ENCODE measurements at regions of chr2 and their contacts with region 1.

Region 1: GRCh38 chr2:69858261-69858660 is 28.8 kb downstream of the GMCL1 start:
- DNase-seq: no peak
- ATAC-seq: no peak
- H3K4me3 ChIP-seq: no peak overlapping the region
- H3K27ac ChIP-seq: no peak overlapping the region
- H3K4me1 ChIP-seq: no peaks in the 10 kb centered on the region
- H3K27me3 ChIP-seq: no peaks in the 10 kb centered on the region
- CTCF ChIP-seq: no peak

Region 2: DNA sequence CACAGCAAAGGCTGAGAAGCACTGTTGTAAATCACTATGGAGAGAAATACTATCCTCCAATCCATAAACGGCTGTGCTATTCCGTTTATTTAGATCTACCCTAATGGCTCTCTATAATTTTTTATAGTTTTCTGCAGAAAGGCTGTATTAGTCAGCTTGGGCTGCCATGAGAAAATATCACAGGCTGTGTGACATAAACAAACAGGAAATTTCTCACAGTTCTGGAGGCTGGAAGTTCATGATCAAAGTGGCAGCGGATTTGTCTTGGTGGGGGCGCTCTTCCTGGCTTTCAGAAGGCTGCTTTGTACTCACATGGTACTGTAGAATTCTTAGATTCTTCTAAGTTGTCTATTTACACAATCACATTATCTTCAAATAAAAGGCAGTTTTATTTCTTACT is 1839.5 kb before region 1 on chr2:
- intact Hi-C with region 1: no loop called
- DNase-seq: no peak
- ATAC-seq: no peak
- H3K4me3 ChIP-seq: no peak overlapping the region
- H3K27ac ChIP-seq: no peak overlapping the region
- H3K4me1 ChIP-seq: no peaks in the 10 kb centered on the region
- H3K27me3 ChIP-seq: peaks cover 0 to 5% (median 0%) of the 10 kb centered on the region in 7 donors
- CTCF ChIP-seq: no peak

Region 3: GRCh38 chr2:69615078-69615650 is 243.1 kb before region 1 on chr2:
- intact Hi-C with region 1: no loop called
- DNase-seq: no peak
- ATAC-seq: no peak
- H3K4me3 ChIP-seq: no peak overlapping the region
- H3K27ac ChIP-seq: no peak overlapping the region
- H3K4me1 ChIP-seq: peaks cover 4 to 56% (median 39%) of the 10 kb centered on the region in 9 donors
- H3K27me3 ChIP-seq: no peaks in the 10 kb centered on the region
- CTCF ChIP-seq: no peak

Region 4: DNA sequence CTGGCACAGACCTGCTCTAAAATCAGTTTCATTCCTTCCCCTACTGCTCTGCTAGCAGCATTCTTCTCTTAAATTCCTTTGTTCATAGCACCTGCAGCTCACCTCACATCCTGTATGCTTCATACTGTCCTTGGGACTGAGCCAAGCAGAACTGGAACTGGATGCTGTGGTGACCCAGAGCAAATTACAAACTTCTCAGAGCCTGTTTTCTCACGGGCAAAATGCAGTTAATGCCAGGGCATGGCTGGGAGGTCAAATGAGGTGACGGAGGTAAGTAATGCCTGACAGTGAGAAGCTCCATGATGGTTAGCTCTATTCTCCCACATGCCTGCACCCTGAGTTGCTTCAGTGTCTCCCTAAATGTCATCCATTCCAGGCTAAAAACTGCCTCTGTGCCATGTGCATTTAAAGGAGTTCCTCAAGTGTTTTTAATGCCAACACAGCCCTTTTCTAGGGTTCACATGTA is 302.8 kb after region 1 on chr2:
- intact Hi-C with region 1: loop called in 1 of 10 experiments (anchors 5 kb)
- DNase-seq: no peak
- ATAC-seq: no peak
- H3K4me3 ChIP-seq: no peak overlapping the region
- H3K27ac ChIP-seq: no peak overlapping the region
- H3K4me1 ChIP-seq: no peaks in the 10 kb centered on the region
- H3K27me3 ChIP-seq: no peaks in the 10 kb centered on the region
- CTCF ChIP-seq: no peak

Measured in heart right ventricle (tissue), 16 donors.